Endothelial cell of umbilical vein (primary cell): ENCODE measurements at regions of chr3 and their contacts with region 1.

Region 1: DNA sequence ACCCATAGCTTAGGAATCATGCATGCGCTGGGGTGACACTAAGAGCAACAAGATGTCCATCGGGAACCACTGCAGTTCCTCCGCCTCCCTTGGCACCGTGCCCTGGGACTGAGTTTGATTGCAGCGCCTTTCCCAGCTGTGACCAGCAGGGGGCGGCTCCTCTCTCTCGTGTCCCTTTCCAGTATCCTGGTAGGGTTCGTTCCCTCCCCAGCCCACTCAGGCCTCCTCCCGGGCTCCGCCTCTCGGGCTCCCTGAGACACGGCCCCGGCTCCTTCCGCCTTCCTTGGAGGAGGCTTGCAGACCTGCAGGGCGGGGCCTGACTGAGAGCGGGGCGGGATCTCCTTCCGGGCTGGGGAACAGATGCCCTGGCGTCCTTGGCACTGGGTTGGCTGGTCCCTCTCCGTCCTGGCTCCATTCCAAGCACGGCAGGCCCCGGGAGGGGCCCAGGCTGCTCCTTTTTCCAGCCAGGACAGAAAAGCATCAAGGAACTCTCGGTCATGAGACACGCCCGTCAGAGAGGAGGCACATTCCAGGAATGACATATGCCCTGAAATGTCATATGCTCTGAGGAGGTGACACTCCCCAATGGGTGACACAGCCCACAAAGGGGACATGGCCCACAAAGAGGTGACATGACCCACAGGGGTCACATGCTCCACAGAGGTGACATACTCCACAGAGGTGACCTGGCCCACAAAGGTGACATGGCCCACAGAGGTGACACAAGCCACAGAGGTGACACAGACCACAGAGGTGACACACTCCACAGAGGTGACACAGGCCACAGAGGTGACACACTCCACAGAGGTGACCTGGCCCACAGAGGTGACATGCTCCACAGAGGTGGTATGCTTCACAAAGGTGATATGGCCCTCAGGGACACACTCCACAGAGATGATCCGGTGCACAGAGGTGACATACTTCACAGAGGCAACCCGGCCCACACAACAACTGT is 79.0 kb downstream of the ABHD5 start:
- DNase-seq: peak; percentile 93
- H3K4me3 ChIP-seq: peak overlapping the region in 1 of 3 experiments; percentile 23
- H3K27ac ChIP-seq: peak overlapping the region; percentile 16
- H3K4me1 ChIP-seq: peaks cover 50% of the 10 kb centered on the region
- H3K27me3 ChIP-seq: no peaks in the 10 kb centered on the region
- CTCF ChIP-seq: peak; percentile 98
- POLR2A ChIP-seq: no peak

Region 2: DNA sequence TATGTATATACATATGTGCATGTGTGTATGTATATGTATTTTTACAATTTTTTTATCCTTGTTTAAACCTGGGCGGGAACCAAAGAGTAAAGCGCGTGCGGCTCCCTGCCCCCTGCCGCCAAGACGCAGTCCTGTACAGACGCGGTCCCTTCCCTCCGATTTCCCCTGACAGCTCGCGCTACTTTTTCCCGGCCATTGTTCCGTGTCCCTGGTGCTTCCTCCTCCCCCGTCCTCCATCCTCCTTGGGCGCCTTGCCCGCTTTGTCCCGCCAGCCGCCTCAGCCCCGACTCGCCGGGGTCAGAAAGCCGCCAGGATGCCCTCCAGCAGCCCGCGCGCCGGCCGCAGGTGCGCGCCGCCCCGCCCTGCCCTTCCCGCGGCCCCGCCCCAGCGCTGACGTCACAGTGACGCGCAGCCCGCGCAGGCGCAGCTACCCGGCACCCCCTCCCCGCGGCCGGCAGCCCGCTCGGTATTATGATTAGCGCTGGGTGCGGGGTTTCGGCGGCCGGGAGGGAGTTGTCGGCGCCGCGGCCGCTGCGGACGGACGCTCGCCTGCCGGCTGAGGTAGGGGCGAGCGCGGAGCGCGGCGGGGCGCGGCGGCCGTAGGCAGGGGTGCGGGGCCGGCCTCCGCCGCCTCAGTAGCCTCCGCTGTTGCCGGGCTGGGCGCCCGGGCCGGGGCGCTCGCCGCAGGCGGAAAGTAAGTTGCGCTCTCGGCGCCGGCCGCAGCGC is 483.5 kb before region 1 on chr3 and contains the start of gene SNRK:
- CTCF ChIA-PET with region 1: no interaction called
- POLR2A ChIA-PET with region 1: no interaction called
- dilution Hi-C with region 1: no loop called
- intact Hi-C with region 1: loop called (anchors 5 kb)
- DNase-seq: peak; percentile 99
- H3K4me3 ChIP-seq: peak within 1 kb of the TSS; percentile 60 to 100 (median 99)
- H3K27ac ChIP-seq: peak within 1 kb of the TSS; percentile 100
- H3K4me1 ChIP-seq: peaks cover 43% of the 10 kb centered on the region
- H3K27me3 ChIP-seq: no peaks in the 10 kb centered on the region
- CTCF ChIP-seq: peak; percentile 32 to 42
- POLR2A ChIP-seq: peak; percentile 87
- total RNA-seq, gene SNRK: 99.9 and 108 TPM in 2 replicates

Region 3: GRCh38 chr3:43632269-43632733 is 137.4 kb before region 1 on chr3:
- CTCF ChIA-PET with region 1: no interaction called
- POLR2A ChIA-PET with region 1: no interaction called
- dilution Hi-C with region 1: no loop called
- intact Hi-C with region 1: loop called (anchors 1 kb)
- DNase-seq: peak; percentile 77
- H3K4me3 ChIP-seq: no peak overlapping the region
- H3K27ac ChIP-seq: peak overlapping the region; percentile 69
- H3K4me1 ChIP-seq: peaks cover 14% of the 10 kb centered on the region
- H3K27me3 ChIP-seq: no peaks in the 10 kb centered on the region
- CTCF ChIP-seq: no peak
- POLR2A ChIP-seq: no peak

Region 4: DNA sequence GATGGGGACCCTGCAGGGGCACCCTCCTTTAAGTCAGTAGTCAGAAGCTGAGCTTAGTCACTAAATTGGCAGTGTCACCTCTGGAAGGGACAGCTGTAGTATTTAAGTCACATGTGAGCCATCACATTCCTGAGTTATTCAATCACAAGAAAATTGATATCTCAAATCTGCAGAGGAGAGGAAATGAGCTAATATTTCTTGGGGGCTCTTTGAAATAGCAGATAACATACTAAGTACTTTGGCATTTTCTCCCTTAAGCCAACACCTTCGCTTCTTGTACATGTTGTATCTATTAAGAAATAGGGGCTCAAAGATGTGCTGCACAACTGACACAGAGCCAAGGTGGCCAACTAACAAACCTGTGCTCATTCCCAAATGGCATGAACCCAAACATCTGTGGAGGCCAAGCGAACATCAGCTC is 16.0 kb before region 1 on chr3:
- CTCF ChIA-PET with region 1: interaction called, 21 read pairs
- POLR2A ChIA-PET with region 1: interaction called, 11 read pairs
- dilution Hi-C with region 1: no loop called
- intact Hi-C with region 1: no loop called
- DNase-seq: peak; percentile 62
- H3K4me3 ChIP-seq: no peak overlapping the region
- H3K27ac ChIP-seq: peak overlapping the region; percentile 68
- H3K4me1 ChIP-seq: peaks cover 19% of the 10 kb centered on the region
- H3K27me3 ChIP-seq: no peaks in the 10 kb centered on the region
- CTCF ChIP-seq: no peak
- POLR2A ChIP-seq: no peak

Region 5: GRCh38 chr3:43870120-43870519 is 100.4 kb after region 1 on chr3:
- CTCF ChIA-PET with region 1: interaction called, 3 read pairs
- POLR2A ChIA-PET with region 1: no interaction called
- dilution Hi-C with region 1: no loop called
- intact Hi-C with region 1: loop called (anchors 1 kb)
- DNase-seq: peak; percentile 77
- H3K4me3 ChIP-seq: no peak overlapping the region
- H3K27ac ChIP-seq: peak overlapping the region; percentile 49
- H3K4me1 ChIP-seq: peaks cover 49% of the 10 kb centered on the region
- H3K27me3 ChIP-seq: no peaks in the 10 kb centered on the region
- CTCF ChIP-seq: no peak
- POLR2A ChIP-seq: no peak

Region 6: DNA sequence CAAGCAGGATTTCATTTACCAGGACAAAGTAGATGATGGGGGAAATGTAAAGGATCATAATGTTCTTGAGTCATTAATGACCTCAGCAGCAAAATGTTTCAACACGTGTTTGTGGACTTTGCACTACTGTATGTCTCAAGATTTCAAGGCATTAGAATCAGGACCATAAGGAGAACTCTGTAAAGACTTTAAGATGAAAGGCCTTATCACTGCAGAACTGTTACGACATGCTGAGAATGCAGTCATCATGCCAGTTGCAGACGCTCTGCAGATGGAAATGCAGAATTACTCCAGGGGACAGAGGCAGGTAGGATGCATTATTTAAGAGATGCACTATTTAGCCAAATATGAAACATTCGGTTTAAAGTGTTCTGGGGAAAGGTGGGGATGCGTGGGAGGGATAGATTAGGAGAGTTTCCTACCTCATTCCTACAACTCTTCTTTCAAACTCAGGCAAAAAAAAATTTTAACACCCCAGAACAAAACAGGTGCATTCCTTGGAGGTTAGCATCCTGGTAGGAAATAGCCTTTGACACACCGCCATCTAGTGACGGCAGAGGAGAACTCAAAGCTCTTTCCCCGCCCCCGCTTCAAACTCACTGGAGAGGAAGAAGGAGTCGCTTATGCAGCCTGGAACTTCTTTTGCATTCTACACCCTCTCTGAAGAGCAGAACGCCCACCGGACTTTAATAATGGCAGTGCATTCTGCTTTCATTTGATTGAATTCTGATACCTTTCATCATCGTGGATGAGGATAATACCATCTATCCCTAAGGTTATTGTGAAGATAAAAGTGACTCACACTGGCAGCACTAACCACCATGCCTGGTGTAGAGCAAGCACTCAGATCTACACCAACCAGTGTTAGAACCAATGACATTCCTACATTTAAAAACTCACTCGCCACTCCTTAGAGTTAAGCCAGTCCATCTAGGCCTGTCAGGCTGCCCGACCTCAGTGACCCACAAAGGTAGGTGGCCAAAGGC is 428.8 kb after region 1 on chr3:
- CTCF ChIA-PET with region 1: interaction called, 14 read pairs
- POLR2A ChIA-PET with region 1: no interaction called
- dilution Hi-C with region 1: no loop called
- intact Hi-C with region 1: loop called (anchors 1 kb)
- DNase-seq: peak; percentile 69
- H3K4me3 ChIP-seq: no peak overlapping the region
- H3K27ac ChIP-seq: no peak overlapping the region
- H3K4me1 ChIP-seq: no peaks in the 10 kb centered on the region
- H3K27me3 ChIP-seq: peaks cover 2 to 3% of the 10 kb centered on the region in 2 experiments
- CTCF ChIP-seq: peak; percentile 72 to 83
- POLR2A ChIP-seq: no peak